ENCODE measurements at regions of chr1 and their contacts with region 1.

Region 1: DNA sequence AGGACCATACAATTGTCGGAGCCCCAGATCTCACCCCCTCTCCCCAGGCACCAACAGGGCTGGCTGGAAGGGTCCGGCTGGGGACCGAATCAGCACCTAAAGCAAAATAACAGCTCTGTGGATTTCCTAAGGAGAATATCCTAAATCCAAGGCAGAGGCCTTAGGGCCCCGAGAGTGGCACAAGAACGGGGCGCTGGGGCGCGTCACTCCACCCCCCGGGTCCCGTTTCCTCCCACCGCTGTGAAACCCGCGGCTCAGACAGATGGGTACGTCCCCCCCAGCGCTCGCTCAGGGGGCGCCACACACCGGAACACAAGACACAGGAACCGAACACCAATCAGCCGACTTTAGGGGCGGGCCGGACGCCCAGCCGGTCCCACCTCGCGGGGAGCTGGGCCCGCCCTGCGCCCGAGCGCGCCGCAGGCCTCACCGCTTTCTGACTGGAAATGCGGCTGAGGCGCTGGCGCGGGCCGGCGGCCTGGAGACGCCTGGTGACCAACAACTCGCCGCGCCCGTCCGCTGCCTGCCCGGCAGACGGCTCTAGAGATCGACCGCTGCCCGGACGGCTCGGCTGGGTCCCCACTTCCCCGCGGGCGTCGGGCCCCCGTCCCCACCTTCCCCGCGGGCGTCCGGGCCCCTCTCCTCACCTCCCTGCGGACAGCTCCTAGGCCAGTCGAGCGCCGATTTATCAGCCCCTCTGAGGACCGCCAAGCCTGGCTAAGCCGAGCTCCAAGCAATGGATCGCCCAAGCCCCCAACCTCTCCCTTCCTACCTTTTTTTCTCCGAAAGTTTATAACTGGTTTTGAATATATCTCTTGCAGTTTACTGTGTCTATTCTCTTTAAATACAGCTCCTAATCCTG is at the start of gene HFM1:
- DNase-seq: peak; percentile 59
- ATAC-seq: peak; percentile 99
- H3K4me3 ChIP-seq: peak within 1 kb of the TSS; percentile 60 to 76 (median 70)
- H3K27ac ChIP-seq: no peak within 1 kb of the TSS
- H3K4me1 ChIP-seq: no peaks in the 10 kb centered on the region
- H3K27me3 ChIP-seq: peaks cover 0 to 10% of the 10 kb centered on the region in 2 experiments; a peak in 1 of 5 replicates
- CTCF ChIP-seq: peak; percentile 47
- EP300 ChIP-seq: no peak
- POLR2A ChIP-seq: no peak
- RAD21 ChIP-seq: no peak
- total RNA-seq, gene HFM1: 0.29 and 1.4 TPM in 2 replicates

Region 2: GRCh38 chr1:91325461-91325860 is 78.9 kb before region 1 on chr1:
- CTCF ChIA-PET with region 1: no interaction called
- POLR2A ChIA-PET with region 1: no interaction called
- in situ Hi-C with region 1: no loop called
- intact Hi-C with region 1: no loop called
- DNase-seq: no peak
- ATAC-seq: no peak
- H3K4me3 ChIP-seq: no peak overlapping the region
- H3K27ac ChIP-seq: no peak overlapping the region
- H3K4me1 ChIP-seq: no peaks in the 10 kb centered on the region
- H3K27me3 ChIP-seq: no peaks in the 10 kb centered on the region
- CTCF ChIP-seq: no peak
- EP300 ChIP-seq: no peak
- POLR2A ChIP-seq: no peak
- RAD21 ChIP-seq: no peak

Region 3: DNA sequence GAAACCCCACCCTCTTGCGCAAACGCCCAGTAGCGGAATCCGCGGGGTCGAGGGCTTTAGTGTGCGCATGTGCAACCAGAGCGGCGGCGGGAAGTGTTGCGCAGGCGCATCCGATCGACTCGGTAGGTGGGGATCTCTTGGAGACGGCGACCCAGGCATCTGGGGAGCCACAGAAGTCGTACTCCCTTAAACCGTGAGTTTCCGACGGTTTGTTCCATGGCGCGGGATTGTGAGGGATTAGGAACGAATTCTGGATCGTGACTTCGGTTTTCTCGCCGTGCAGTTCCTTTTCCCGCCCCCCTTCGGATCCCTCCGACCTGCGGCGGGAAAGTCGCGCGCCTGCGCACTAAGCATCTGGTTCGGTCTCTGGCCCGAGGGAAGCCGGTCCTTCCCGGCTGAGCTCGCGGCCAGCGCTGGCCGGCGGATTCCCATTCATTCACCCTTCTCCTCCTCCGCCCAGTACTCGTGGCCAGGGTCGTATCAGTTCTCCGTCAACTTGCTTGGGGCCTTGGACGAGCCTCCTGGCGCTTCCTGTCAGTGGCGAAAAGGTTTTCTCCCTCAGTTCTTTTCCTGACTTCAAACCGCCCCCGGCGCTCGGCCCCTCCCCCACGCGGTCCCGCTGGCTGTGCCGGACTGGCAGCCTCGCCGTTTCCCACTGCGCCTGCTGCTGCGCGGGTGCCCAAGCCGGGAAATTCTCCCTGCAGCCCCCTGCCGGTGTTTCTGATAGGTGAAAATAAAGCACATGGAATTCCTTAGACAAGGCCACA is 96.6 kb after region 1 on chr1 and contains the start of gene CDC7:
- CTCF ChIA-PET with region 1: no interaction called
- POLR2A ChIA-PET with region 1: interaction called, 4 read pairs
- in situ Hi-C with region 1: no loop called
- intact Hi-C with region 1: loop called (anchors 1 kb)
- DNase-seq: peak; percentile 86
- ATAC-seq: peak; percentile 18
- H3K4me3 ChIP-seq: peak within 1 kb of the TSS; percentile 49 to 69 (median 51); a peak in 5 of 6 replicates
- H3K27ac ChIP-seq: peak within 1 kb of the TSS; percentile 81
- H3K4me1 ChIP-seq: peaks cover 23% of the 10 kb centered on the region
- H3K27me3 ChIP-seq: no peaks in the 10 kb centered on the region
- CTCF ChIP-seq: peak; percentile 53
- EP300 ChIP-seq: no peak
- POLR2A ChIP-seq: peak; percentile 14 to 19; a peak in 2 of 4 replicates
- RAD21 ChIP-seq: peak; percentile 35
- total RNA-seq, gene CDC7: 12.6 and 19.2 TPM in 2 replicates